ENCODE measurements at regions of chr19 and their contacts with region 1.

Region 1: GRCh38 chr19:39532233-39533002 is at the start of gene EID2B:
- DNase-seq: peak; percentile 94
- H3K4me3 Mint-ChIP-seq: peak within 1 kb of the TSS; percentile 92
- H3K27ac Mint-ChIP-seq: peak within 1 kb of the TSS; percentile 84
- H3K4me1 Mint-ChIP-seq: peaks cover 14% of the 10 kb centered on the region
- H3K27me3 Mint-ChIP-seq: peaks cover 2% of the 10 kb centered on the region
- total RNA-seq, gene EID2B: 3.2 and 3.7 TPM in 2 replicates

Region 2: DNA sequence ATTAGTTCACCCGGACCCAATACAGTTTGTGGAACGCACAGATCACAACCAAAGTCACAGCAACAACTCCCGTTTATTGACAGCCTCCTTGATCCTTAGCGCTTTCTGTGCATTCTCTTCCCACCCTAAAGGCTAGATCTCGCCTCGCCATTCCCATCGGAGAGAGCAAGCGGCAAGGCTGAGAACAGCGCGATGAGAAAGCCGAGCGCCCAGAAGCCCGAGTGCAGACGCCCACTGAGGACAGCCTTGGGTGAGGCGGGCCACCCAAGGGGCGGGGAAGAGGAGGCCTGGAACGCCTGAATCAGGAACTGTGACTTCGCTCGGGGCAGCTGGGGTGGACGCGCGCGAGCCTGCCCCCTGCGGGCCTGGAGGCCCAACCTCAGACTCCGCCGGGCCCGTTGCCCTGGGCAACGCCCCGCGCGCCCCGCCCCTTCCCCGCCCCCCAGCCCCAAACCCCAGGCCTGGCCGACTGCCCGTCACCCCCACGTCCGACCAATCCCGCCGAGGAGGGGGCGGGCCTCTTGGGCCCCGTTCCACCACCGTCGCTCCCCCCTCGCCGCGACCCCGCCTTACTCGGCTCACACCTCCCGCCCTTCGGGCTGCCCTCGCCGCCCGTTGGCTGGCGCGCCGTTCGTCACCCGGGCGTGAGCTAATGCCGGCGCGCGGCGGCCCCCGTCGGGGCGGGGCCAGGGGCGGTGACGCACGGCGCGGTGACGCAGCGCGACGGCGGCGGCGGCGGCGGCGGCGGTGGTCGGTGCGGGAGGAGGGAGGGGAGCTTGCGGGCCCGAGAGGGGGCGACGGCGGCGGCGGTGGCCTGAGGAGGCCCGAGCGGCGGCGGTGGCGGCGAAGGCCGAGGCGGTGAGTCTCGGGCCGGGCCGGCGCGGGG is 190.5 kb before region 1 on chr19 and contains the start of gene SAMD4B:
- intact Hi-C with region 1: loop called (anchors 2 kb)
- DNase-seq: peak; percentile 99
- H3K4me3 Mint-ChIP-seq: peak within 1 kb of the TSS; percentile 99
- H3K27ac Mint-ChIP-seq: peak within 1 kb of the TSS; percentile 96
- H3K4me1 Mint-ChIP-seq: peaks cover 73% of the 10 kb centered on the region
- H3K27me3 Mint-ChIP-seq: no peaks in the 10 kb centered on the region
- total RNA-seq, gene SAMD4B: 71.3 and 71.8 TPM in 2 replicates

Region 3: GRCh38 chr19:39397360-39398296 is 134.8 kb before region 1 on chr19:
- intact Hi-C with region 1: loop called (anchors 1 kb)
- DNase-seq: peak; percentile 88
- H3K4me3 Mint-ChIP-seq: no peak overlapping the region
- H3K27ac Mint-ChIP-seq: peak overlapping the region; percentile 67
- H3K4me1 Mint-ChIP-seq: peaks cover 58% of the 10 kb centered on the region
- H3K27me3 Mint-ChIP-seq: no peaks in the 10 kb centered on the region

Region 4: GRCh38 chr19:39474139-39474622 is 58.2 kb before region 1 on chr19:
- intact Hi-C with region 1: loop called (anchors 1 kb)
- DNase-seq: peak; percentile 57
- H3K4me3 Mint-ChIP-seq: no peak overlapping the region
- H3K27ac Mint-ChIP-seq: peak overlapping the region; percentile 53
- H3K4me1 Mint-ChIP-seq: peaks cover 24% of the 10 kb centered on the region
- H3K27me3 Mint-ChIP-seq: no peaks in the 10 kb centered on the region

Region 5: DNA sequence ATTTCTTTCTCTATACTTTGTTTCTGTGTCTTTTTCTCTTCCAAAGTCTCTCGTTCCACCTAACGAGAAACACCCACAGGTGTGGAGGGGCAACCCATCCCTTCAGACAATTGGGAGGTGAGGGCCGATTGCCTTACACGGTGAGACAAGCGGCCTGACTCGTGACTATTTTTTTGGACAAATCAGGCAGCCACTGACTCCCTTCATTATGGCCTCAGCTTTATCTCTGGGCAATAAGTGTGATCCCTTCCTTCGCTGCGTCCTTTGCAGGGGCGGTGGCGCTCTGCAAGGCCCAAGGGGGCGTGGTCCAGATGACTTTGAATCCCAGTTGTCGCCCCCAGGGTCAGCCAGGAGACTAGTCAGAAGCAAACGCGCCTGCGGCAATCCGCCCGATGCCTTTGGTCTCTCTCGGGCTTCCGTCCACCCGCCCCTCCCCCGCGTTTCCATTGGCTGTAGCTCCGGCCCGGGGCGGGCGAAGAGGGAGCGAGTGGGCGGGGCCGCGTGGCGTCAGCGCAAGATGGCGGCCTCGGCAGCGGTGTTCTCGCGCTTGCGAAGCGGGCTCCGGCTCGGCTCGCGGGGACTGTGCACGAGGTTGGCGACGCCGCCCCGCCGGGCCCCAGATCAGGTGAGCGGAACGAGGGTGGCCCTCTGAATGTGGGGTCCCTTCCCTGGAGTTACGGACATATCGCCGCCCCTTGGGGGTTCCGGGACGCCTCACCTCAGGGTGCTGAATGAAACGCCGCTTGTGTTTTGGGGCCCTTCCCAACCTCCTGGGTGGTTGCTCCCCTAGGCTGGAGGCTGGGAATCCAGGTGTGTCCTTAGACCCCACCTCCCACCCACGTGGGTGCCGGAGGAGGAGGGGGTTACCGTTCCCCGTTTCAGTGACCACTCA is 51.8 kb before region 1 on chr19 and contains the start of gene TIMM50:
- intact Hi-C with region 1: loop called (anchors 1 kb)
- DNase-seq: peak; percentile 96
- H3K4me3 Mint-ChIP-seq: peak within 1 kb of the TSS; percentile 95
- H3K27ac Mint-ChIP-seq: peak within 1 kb of the TSS; percentile 94
- H3K4me1 Mint-ChIP-seq: peaks cover 28% of the 10 kb centered on the region
- H3K27me3 Mint-ChIP-seq: no peaks in the 10 kb centered on the region
- total RNA-seq, gene TIMM50: 121 and 127 TPM in 2 replicates

Region 6: DNA sequence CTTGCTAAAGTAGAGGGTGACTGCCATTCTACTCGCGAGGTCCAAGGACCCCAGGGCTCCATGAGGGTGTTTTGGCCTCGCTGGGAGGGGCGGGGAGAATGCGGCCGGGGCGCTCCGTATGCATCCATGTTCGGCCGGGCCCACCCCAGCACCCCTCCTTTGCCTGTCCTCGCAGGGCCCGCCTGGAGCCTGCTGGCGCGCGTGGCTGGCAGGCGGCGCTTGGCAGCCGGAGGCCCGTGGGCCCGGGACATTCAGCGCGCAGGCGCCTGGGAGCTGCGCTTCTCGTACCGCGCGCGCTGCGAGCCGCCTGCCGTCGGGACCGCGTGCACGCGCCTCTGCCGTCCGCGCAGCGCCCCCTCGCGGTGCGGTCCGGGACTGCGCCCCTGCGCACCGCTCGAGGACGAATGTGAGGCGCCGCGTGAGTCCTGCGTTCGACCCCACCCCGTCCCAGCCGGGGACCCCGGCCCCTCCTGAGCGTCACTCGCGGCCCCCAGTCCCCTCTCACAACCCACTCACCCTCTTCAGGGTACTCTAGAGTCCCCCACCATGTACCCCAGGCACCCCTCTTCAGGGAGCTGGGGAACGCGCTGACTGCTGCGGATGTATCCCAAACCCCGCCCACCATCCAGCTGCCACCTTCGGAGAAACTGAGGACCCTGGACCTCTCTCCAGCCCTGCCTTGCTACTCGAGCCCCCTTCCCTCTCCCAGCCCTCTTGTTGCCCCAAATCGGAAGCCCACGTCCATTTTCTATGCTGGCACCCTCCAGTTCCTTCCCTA is 29.6 kb before region 1 on chr19:
- intact Hi-C with region 1: loop called (anchors 1 kb)
- DNase-seq: peak; percentile 76
- H3K4me3 Mint-ChIP-seq: no peak overlapping the region
- H3K27ac Mint-ChIP-seq: no peak overlapping the region
- H3K4me1 Mint-ChIP-seq: peaks cover 27% of the 10 kb centered on the region
- H3K27me3 Mint-ChIP-seq: peaks cover 70% of the 10 kb centered on the region

Region 7: DNA sequence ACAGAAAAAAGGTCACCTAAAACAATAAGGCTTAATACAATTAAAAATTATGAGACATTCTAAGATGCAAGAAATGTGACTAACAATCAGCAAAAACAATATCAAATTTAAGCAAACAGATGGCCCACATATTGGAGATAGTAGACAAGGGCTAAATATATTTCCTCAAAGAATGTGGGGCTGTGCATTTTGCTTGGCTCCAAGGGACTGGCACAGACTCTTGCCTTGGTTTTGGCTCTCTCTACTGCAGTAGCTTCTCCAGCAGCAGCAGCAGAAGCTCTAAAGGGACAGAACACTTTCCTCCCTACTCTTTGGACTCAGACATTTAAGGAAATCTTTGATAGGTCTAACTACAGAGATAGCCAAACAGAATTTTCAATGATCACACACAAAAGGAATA is 596.6 kb after region 1 on chr19:
- intact Hi-C with region 1: no loop called
- DNase-seq: no peak
- H3K4me3 Mint-ChIP-seq: no peak overlapping the region
- H3K27ac Mint-ChIP-seq: no peak overlapping the region
- H3K4me1 Mint-ChIP-seq: no peaks in the 10 kb centered on the region
- H3K27me3 Mint-ChIP-seq: peaks cover 34% of the 10 kb centered on the region

Measured in activated T-helper 1 cell treated with anti-CD3 and anti-CD28 coated beads, Interleukin-12 subunit alpha, Interleukin-12 subunit beta, Interleukin-2, Interleukin-4 antibody, amounts not matched to agents 30 ng/mL and 10 ng/mL and 1 ng/mL, durations not matched to agents 14 hours and 24 hours and 36 hours (primary cell).